ENCODE measurements at regions of chr9 and their contacts with region 1.

Region 1: GRCh38 chr9:20622330-20623020 is at the start of gene MLLT3:
- DNase-seq: peak; percentile 93
- H3K4me3 Mint-ChIP-seq: peak within 1 kb of the TSS; percentile 84
- H3K27ac Mint-ChIP-seq: peak within 1 kb of the TSS; percentile 64
- H3K4me1 Mint-ChIP-seq: peaks cover 10% of the 10 kb centered on the region
- H3K27me3 Mint-ChIP-seq: no peaks in the 10 kb centered on the region
- CTCF ChIP-seq: no peak
- total RNA-seq, gene MLLT3: 22.9 and 23.1 TPM in 2 replicates

Region 2: GRCh38 chr9:19925817-19926503 is 696.5 kb before region 1 on chr9:
- CTCF ChIA-PET with region 1: no interaction called
- intact Hi-C with region 1: loop called (anchors 5 kb)
- DNase-seq: peak; percentile 78
- H3K4me3 Mint-ChIP-seq: peak overlapping the region; percentile 64
- H3K27ac Mint-ChIP-seq: no peak overlapping the region
- H3K4me1 Mint-ChIP-seq: no peaks in the 10 kb centered on the region
- H3K27me3 Mint-ChIP-seq: peaks cover 35% of the 10 kb centered on the region
- CTCF ChIP-seq: peak; percentile 83

Region 3: GRCh38 chr9:20426019-20426418 is 196.5 kb before region 1 on chr9:
- CTCF ChIA-PET with region 1: no interaction called
- intact Hi-C with region 1: loop called (anchors 5 kb)
- DNase-seq: no peak
- H3K4me3 Mint-ChIP-seq: no peak overlapping the region
- H3K27ac Mint-ChIP-seq: no peak overlapping the region
- H3K4me1 Mint-ChIP-seq: no peaks in the 10 kb centered on the region
- H3K27me3 Mint-ChIP-seq: no peaks in the 10 kb centered on the region
- CTCF ChIP-seq: no peak

Region 4: DNA sequence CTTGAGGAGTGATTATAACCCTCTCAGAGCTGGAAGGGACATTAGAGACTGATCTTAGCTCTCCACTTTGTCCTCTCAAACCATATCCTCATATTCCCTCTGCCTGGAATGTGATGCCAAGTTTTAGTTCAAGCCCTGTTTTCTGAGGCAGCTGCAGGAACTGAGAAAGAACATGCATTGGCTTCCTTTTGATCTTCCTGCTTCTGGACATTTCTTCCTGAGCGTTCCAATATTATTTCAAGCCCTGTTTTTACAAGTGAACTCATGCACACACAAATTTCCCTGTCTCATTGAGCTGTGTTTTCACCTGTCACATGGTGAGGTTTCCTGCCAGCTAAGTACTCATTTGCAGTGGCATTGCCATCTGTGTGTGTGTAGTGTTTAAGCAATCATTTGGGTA is 78.6 kb after region 1 on chr9:
- CTCF ChIA-PET with region 1: no interaction called
- intact Hi-C with region 1: no loop called
- DNase-seq: no peak
- H3K4me3 Mint-ChIP-seq: no peak overlapping the region
- H3K27ac Mint-ChIP-seq: no peak overlapping the region
- H3K4me1 Mint-ChIP-seq: peaks cover 8% of the 10 kb centered on the region
- H3K27me3 Mint-ChIP-seq: no peaks in the 10 kb centered on the region
- CTCF ChIP-seq: no peak

Region 5: GRCh38 chr9:20754556-20754955 is 132.1 kb after region 1 on chr9:
- CTCF ChIA-PET with region 1: no interaction called
- intact Hi-C with region 1: loop called (anchors 10 kb)
- DNase-seq: no peak
- H3K4me3 Mint-ChIP-seq: no peak overlapping the region
- H3K27ac Mint-ChIP-seq: no peak overlapping the region
- H3K4me1 Mint-ChIP-seq: peaks cover 16% of the 10 kb centered on the region
- H3K27me3 Mint-ChIP-seq: no peaks in the 10 kb centered on the region
- CTCF ChIP-seq: no peak

Region 6: GRCh38 chr9:20884985-20885593 is 262.6 kb after region 1 on chr9:
- CTCF ChIA-PET with region 1: no interaction called
- intact Hi-C with region 1: loop called (anchors 10 kb)
- DNase-seq: peak; percentile 54
- H3K4me3 Mint-ChIP-seq: no peak overlapping the region
- H3K27ac Mint-ChIP-seq: no peak overlapping the region
- H3K4me1 Mint-ChIP-seq: no peaks in the 10 kb centered on the region
- H3K27me3 Mint-ChIP-seq: no peaks in the 10 kb centered on the region
- CTCF ChIP-seq: peak; percentile 40

Region 7: DNA sequence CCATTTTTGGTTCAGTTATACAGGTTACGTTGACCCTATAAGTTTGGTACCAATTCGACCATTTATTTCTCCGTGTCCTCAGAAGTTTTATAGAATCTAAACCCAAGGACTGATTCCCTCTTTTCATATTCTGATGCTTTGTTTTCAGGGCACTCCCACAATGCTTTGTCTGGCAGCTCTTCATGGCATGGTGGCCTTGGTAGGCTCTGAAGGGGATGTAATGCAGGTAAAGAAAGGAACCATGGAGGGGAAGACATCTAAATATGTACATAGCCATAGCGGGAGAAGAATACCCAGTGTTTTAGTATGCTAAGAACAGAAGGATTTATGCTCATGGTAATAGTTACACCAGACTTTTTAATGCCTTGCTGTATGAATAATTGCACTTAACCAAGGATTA is 326.2 kb after region 1 on chr9:
- CTCF ChIA-PET with region 1: no interaction called
- intact Hi-C with region 1: no loop called
- DNase-seq: no peak
- H3K4me3 Mint-ChIP-seq: no peak overlapping the region
- H3K27ac Mint-ChIP-seq: no peak overlapping the region
- H3K4me1 Mint-ChIP-seq: no peaks in the 10 kb centered on the region
- H3K27me3 Mint-ChIP-seq: no peaks in the 10 kb centered on the region
- CTCF ChIP-seq: no peak

Region 8: DNA sequence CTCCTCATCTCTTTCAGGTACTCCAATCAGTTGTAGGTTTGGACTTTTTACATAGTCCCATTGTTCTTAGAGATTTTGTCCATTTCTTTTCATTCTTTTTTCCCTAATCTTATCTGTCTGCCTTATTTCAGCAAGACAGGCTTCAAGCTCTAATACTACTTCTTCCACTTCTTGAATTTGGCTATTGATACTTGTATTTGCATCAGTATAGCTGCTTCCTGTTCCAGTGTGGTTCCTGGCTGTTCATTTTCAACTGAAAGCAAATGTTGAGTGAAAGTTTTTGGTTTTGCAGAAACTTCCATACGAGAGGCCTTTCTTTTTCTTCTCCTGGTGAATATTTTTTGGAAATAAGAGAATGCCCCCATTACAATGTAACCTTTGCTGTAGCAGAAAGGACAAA is 805.8 kb after region 1 on chr9:
- CTCF ChIA-PET with region 1: no interaction called
- intact Hi-C with region 1: no loop called
- DNase-seq: no peak
- H3K4me3 Mint-ChIP-seq: no peak overlapping the region
- H3K27ac Mint-ChIP-seq: no peak overlapping the region
- H3K4me1 Mint-ChIP-seq: no peaks in the 10 kb centered on the region
- H3K27me3 Mint-ChIP-seq: peaks cover 8% of the 10 kb centered on the region
- CTCF ChIP-seq: no peak